Naive thymus-derived CD4-positive, alpha-beta T cell (primary cell): ENCODE measurements at regions of chr6 and their contacts with region 1.

Region 1: GRCh38 chr6:13487122-13488014 is at the start of gene GFOD1:
- DNase-seq: peak; percentile 33 to 87 (median 54)
- ATAC-seq: peak; percentile 90
- H3K4me3 ChIP-seq: peak within 1 kb of the TSS; percentile 80
- H3K4me3 Mint-ChIP-seq: peak within 1 kb of the TSS; percentile 78 to 96 (median 92)
- H3K27ac ChIP-seq: peak within 1 kb of the TSS; percentile 23
- H3K27ac Mint-ChIP-seq: peak within 1 kb of the TSS in 7 of 9 donors; percentile 35 to 76 (median 65)
- H3K4me1 ChIP-seq: peaks cover 4 to 9% of the 10 kb centered on the region in 2 donors
- H3K4me1 Mint-ChIP-seq: peaks cover 23 to 40% (median 30%) of the 10 kb centered on the region in 7 donors
- H3K27me3 ChIP-seq: no peaks in the 10 kb centered on the region
- H3K27me3 Mint-ChIP-seq: peaks cover 0 to 14% (median 12%) of the 10 kb centered on the region in 5 donors
- total RNA-seq, gene GFOD1: 0.73 to 10.8 (median 2.0) TPM

Region 2: GRCh38 chr6:12249531-12250383 is 1237.6 kb before region 1 on chr6:
- CTCF ChIA-PET with region 1: no interaction called
- POLR2A ChIA-PET with region 1: no interaction called
- intact Hi-C with region 1: no loop called
- DNase-seq: no peak
- ATAC-seq: no peak
- H3K4me3 ChIP-seq: no peak overlapping the region
- H3K4me3 Mint-ChIP-seq: no peak overlapping the region
- H3K27ac ChIP-seq: no peak overlapping the region
- H3K27ac Mint-ChIP-seq: no peak overlapping the region
- H3K4me1 ChIP-seq: no peaks in the 10 kb centered on the region
- H3K4me1 Mint-ChIP-seq: no peaks in the 10 kb centered on the region
- H3K27me3 ChIP-seq: no peaks in the 10 kb centered on the region
- H3K27me3 Mint-ChIP-seq: peaks cover 10 to 41% (median 15%) of the 10 kb centered on the region in 5 donors

Region 3: GRCh38 chr6:13336553-13336952 is 150.8 kb before region 1 on chr6:
- CTCF ChIA-PET with region 1: no interaction called
- POLR2A ChIA-PET with region 1: no interaction called
- intact Hi-C with region 1: loop called in 1 of 2 experiments (anchors 1 kb)
- DNase-seq: peak; percentile 39 to 80 (median 60)
- ATAC-seq: peak; percentile 83
- H3K4me3 ChIP-seq: no peak overlapping the region
- H3K4me3 Mint-ChIP-seq: peak overlapping the region in 1 of 10 donors; percentile 14
- H3K27ac ChIP-seq: no peak overlapping the region
- H3K27ac Mint-ChIP-seq: no peak overlapping the region
- H3K4me1 ChIP-seq: no peaks in the 10 kb centered on the region
- H3K4me1 Mint-ChIP-seq: peaks cover 3 to 42% (median 8%) of the 10 kb centered on the region in 7 donors
- H3K27me3 ChIP-seq: no peaks in the 10 kb centered on the region
- H3K27me3 Mint-ChIP-seq: peaks cover 0 to 2% (median 0%) of the 10 kb centered on the region in 5 donors

Region 4: GRCh38 chr6:13417431-13417830 is 69.9 kb before region 1 on chr6:
- CTCF ChIA-PET with region 1: no interaction called
- POLR2A ChIA-PET with region 1: no interaction called
- intact Hi-C with region 1: no loop called
- DNase-seq: no peak
- ATAC-seq: no peak
- H3K4me3 ChIP-seq: no peak overlapping the region
- H3K4me3 Mint-ChIP-seq: no peak overlapping the region
- H3K27ac ChIP-seq: no peak overlapping the region
- H3K27ac Mint-ChIP-seq: no peak overlapping the region
- H3K4me1 ChIP-seq: peaks cover 0 to 3% of the 10 kb centered on the region in 2 donors
- H3K4me1 Mint-ChIP-seq: peaks cover 5 to 43% (median 26%) of the 10 kb centered on the region in 7 donors
- H3K27me3 ChIP-seq: no peaks in the 10 kb centered on the region
- H3K27me3 Mint-ChIP-seq: peaks cover 0 to 4% (median 0%) of the 10 kb centered on the region in 5 donors

Region 5: DNA sequence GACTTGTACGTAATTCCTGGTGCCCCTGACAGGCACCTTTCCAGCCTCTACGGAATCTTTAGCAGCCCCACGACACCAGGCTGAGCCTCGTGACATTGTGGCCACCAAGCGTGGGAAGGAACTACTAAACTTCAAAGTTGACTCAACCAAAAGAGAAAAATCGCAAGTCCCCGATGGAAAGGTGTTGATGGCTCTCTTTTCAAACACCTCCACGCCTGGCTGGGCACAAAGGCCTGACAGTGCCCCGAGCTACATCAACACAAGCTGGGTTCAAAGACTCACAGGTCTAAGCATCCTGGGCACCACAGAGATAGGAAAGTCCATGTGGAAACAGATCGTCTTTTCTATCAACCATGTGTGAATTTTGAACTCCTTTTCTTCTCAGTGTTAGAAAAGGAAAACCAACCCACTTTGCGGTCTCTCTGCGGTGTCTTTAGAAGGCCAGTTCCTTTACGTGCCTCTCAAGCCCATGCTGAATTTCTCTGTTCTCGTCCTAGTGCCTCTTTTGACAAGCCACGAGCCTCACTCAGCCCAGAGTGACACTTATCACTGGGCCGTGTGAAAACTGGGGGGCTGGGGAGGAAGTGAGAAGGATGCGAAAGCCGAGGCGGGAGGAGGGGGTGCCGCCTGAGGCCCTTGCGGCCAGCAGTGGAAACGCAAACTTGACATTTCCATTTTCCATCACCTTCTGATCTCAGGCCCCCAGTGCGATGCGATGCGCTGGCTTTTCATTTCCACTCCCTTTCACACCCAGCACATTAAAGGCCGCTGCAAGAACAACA is 59.4 kb before region 1 on chr6:
- CTCF ChIA-PET with region 1: no interaction called
- POLR2A ChIA-PET with region 1: no interaction called
- intact Hi-C with region 1: loop called (anchors 1 to 2 kb)
- DNase-seq: peak; percentile 29 to 76 (median 52)
- ATAC-seq: peak; percentile 86
- H3K4me3 ChIP-seq: peak overlapping the region; percentile 40
- H3K4me3 Mint-ChIP-seq: peak overlapping the region; percentile 62 to 92 (median 80)
- H3K27ac ChIP-seq: peak overlapping the region; percentile 9
- H3K27ac Mint-ChIP-seq: peak overlapping the region; percentile 1 to 85 (median 79)
- H3K4me1 ChIP-seq: peaks cover 26 to 55% of the 10 kb centered on the region in 2 donors
- H3K4me1 Mint-ChIP-seq: peaks cover 21 to 78% (median 49%) of the 10 kb centered on the region in 7 donors
- H3K27me3 ChIP-seq: no peaks in the 10 kb centered on the region
- H3K27me3 Mint-ChIP-seq: peaks cover 0 to 2% (median 0%) of the 10 kb centered on the region in 5 donors

Region 6: DNA sequence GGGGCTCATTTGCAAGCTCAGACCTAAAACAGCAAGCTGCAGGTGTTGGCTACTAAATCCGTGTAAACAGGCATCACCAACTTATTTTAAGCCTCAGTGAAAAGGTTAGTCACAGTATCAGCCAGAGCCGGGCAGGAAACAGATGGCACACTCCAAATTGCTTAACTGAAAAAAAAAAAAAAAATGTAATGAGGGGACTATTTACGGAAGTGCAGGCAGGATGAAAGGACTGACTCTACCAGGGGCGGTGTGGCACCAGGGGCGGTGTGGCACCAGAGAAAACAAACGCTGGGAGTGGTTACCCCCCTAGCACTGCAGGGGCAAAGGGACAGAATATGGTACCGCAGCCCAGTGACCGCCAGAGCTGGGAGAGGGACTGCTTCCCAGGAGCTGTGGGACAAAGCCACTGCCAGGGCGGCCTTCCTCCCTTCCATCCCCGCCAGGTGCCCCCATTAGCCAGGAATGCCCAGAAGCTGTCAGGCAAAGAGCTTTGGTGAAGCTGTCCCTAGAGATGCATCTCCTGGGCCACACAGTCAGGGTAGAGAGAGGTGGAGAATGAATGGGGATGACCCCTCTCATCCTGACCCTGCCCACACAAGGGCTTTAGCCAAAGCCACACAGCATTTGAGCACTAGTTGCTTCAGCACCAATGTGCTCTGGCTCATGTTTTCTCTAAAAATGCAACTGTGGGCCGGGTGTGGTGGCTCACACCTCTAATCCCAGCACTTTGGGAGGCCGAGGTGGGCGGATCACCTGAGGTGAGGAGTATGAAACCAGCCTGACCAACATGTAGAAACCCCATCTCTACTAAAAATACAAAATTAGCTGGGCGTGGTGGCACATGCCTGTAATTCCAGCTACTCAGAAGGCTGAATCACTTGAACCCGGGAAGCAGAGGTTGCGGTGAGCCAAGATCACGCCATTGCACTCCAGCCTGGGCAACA is 39.6 kb after region 1 on chr6:
- CTCF ChIA-PET with region 1: no interaction called
- POLR2A ChIA-PET with region 1: no interaction called
- intact Hi-C with region 1: loop called in 1 of 2 experiments (anchors 1 kb)
- DNase-seq: peak in 7 of 9 donors; percentile 43 to 70 (median 54)
- ATAC-seq: peak; percentile 94
- H3K4me3 ChIP-seq: no peak overlapping the region
- H3K4me3 Mint-ChIP-seq: peak overlapping the region in 7 of 10 donors; percentile 6 to 50 (median 29)
- H3K27ac ChIP-seq: no peak overlapping the region
- H3K27ac Mint-ChIP-seq: peak overlapping the region; percentile 23 to 81 (median 56)
- H3K4me1 ChIP-seq: peaks cover 0 to 13% of the 10 kb centered on the region in 2 donors
- H3K4me1 Mint-ChIP-seq: peaks cover 9 to 27% (median 15%) of the 10 kb centered on the region in 7 donors
- H3K27me3 ChIP-seq: no peaks in the 10 kb centered on the region
- H3K27me3 Mint-ChIP-seq: no peaks in the 10 kb centered on the region

Region 7: GRCh38 chr6:13614926-13615798 is 127.8 kb after region 1 on chr6 and contains the start of gene NOL7:
- CTCF ChIA-PET with region 1: no interaction called
- POLR2A ChIA-PET with region 1: no interaction called
- intact Hi-C with region 1: loop called (anchors 2 to 10 kb)
- DNase-seq: peak; percentile 96 to 99 (median 98)
- ATAC-seq: peak; percentile 98
- H3K4me3 ChIP-seq: peak within 1 kb of the TSS; percentile 85
- H3K4me3 Mint-ChIP-seq: peak within 1 kb of the TSS; percentile 82 to 98 (median 94)
- H3K27ac ChIP-seq: peak within 1 kb of the TSS; percentile 81
- H3K27ac Mint-ChIP-seq: peak within 1 kb of the TSS; percentile 85 to 97 (median 94)
- H3K4me1 ChIP-seq: peaks cover 8 to 26% of the 10 kb centered on the region in 2 donors
- H3K4me1 Mint-ChIP-seq: peaks cover 25 to 55% (median 47%) of the 10 kb centered on the region in 7 donors
- H3K27me3 ChIP-seq: no peaks in the 10 kb centered on the region
- H3K27me3 Mint-ChIP-seq: peaks cover 0 to 2% (median 0%) of the 10 kb centered on the region in 5 donors
- total RNA-seq, gene NOL7: 49.1 to 65.2 (median 62.1) TPM